Left ventricle myocardium inferior (tissue), 1 donor: ENCODE measurements at regions of chr20 and their contacts with region 1.

Region 1: GRCh38 chr20:47317127-47317895 is 39.2 kb downstream of the ZMYND8 start:
- DNase-seq: peak; percentile 80
- H3K4me3 ChIP-seq: peak overlapping the region; percentile 54
- H3K27ac ChIP-seq: peak overlapping the region; percentile 98
- H3K4me1 ChIP-seq: peaks cover 94% of the 10 kb centered on the region
- H3K27me3 ChIP-seq: no peaks in the 10 kb centered on the region
- CTCF ChIP-seq: peak; percentile 20

Region 2: DNA sequence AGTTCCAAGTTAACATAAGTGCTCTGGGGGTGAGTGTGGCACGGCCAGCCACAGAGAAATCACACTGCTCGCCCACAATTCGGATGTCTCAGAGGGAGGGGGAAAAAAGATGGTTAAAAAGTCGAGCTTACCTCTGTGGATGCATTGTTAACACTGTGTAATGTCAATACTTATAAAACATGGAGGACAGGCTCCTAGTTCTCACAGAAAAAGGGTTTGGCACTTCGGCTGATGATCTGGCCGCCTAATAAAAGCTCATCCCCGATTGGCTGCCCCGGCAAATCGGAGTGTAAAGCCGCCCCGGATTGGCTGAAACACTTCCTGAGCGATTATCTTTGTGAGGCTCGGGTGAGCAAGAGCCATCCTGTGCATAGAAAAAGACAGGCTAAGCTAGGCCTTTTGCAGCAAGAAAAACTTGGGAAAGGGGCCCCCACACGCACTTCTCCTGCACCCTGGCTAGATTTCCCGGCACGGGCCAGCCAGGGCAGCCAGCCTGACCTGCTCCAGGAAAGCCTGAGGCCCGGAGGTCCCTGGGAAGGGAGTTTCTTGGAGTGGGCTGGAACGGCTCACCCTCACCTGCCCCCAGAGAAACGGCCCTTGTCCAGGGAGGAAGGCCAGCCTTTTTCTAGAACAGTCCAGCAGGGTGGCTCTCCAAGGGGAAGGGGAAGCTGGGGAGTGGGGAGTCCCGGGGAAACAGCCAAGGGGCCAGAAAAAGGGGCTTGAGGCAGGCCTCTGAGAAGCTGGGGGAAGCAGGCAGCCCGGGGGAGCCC is 39.4 kb after region 1 on chr20 and contains the start of gene ZMYND8:
- intact Hi-C with region 1: loop called (anchors 5 kb)
- DNase-seq: peak; percentile 88
- H3K4me3 ChIP-seq: peak within 1 kb of the TSS; percentile 55
- H3K27ac ChIP-seq: peak within 1 kb of the TSS; percentile 100
- H3K4me1 ChIP-seq: peaks cover 100% of the 10 kb centered on the region
- H3K27me3 ChIP-seq: no peaks in the 10 kb centered on the region
- CTCF ChIP-seq: no peak
- total RNA-seq, gene ZMYND8: 37.9 TPM

Region 3: GRCh38 chr20:47561180-47561579 is 243.9 kb after region 1 on chr20:
- intact Hi-C with region 1: no loop called
- DNase-seq: no peak
- H3K4me3 ChIP-seq: no peak overlapping the region
- H3K27ac ChIP-seq: no peak overlapping the region
- H3K4me1 ChIP-seq: peaks cover 94% of the 10 kb centered on the region
- H3K27me3 ChIP-seq: no peaks in the 10 kb centered on the region
- CTCF ChIP-seq: no peak